Dorsolateral prefrontal cortex (tissue), 120 donors: ENCODE measurements at regions of chr9 and their contacts with region 1.

Region 1: DNA sequence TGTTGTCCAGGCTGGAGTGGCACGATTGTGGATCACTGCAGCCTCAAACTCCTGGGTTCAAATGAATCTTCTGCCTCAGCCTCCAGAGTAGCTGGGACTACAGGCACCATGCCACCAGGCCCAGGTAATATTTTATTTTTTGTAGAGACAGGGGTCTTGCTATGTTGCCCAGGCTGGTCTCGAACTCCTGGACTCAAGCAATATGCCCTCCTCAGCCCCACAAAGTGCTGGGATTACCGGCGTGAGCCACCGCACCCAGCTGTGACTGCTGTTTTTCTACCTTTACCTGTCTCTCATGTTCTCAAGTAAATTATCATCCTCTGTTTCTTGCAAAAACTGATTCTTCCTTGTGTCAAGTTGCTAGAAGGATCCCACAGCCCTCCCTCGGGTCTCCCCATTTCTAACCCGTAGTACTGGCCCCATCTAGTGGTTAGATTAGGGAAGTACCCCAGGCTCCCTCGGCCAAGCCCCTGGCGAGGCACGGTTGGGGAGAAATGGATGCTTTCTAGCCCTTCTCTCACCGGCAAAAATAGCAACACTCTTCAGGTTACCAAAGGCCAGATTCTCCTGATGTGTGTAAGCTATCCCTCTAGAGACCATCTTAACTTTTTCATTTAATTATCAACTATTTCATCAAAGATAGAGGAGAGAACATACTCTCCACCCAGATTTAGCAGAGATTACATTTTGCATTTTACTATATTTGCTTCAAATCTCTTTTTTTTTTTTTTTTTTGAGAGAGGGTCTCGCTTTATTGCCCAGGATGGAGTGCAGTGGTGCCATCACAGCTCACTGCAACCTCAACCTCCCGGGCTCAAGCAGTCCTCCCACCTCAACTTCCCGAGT is 19.2 kb upstream of the TOR1B start:
- DNase-seq: peak; percentile 36 to 74 (median 68)
- H3K4me3 ChIP-seq: no peak overlapping the region
- H3K27ac ChIP-seq: peak overlapping the region in 1 of 59 donors; percentile 18
- H3K27me3 ChIP-seq: no peaks in the 10 kb centered on the region
- CTCF ChIP-seq: peak; percentile 69 to 97 (median 93)

Region 2: DNA sequence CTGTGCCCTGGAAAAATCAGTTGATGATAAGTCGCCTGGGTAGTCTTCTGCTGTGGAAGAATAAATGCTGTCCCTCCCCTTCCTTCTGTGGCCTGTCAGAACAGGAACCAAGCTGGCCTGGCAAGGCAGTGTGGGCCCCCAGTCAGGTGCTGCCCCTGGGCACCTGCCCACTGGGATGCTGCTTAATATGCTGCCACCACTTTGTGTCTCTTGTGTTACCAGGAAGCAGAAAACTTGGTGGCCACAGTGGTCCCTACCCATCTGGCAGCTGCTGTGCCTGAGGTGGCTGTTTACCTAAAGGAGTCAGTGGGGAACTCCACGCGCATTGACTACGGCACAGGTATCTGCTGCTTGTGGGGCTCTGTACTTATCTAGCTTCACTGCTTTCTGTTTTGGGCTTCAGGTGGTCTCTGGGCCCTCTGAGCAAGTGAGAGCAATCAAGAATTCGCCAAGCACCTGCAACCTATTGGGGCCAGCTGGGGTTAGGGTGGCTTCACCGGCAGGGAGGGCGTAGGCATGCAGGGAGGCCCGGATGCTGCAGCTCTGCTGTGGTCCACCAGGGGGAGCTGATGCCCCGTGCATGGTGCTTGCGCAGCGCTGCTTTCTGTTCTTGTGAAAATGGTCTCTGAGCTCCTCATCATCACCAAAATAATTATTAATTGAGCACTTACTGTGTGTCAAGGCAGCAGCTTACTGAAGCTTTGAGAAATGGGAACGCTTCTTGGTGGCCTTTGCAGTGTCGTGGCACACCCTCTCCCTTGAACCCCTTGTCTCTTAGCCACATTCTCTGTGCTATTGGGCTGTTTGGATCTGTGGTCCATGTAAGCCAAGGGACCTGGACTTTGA is 652.2 kb before region 1 on chr9:
- intact Hi-C with region 1: loop called (anchors 2 to 10 kb)
- DNase-seq: peak; percentile 67 to 86 (median 80)
- H3K4me3 ChIP-seq: no peak overlapping the region
- H3K27ac ChIP-seq: peak overlapping the region in 48 of 59 donors; percentile 1 to 75 (median 48)
- H3K27me3 ChIP-seq: no peaks in the 10 kb centered on the region
- CTCF ChIP-seq: peak; percentile 88 to 99 (median 97)

Region 3: GRCh38 chr9:129139993-129140396 is 643.7 kb before region 1 on chr9:
- intact Hi-C with region 1: loop called in 1 of 2 experiments (anchors 10 kb)
- DNase-seq: peak; percentile 59 to 95 (median 86)
- H3K4me3 ChIP-seq: peak overlapping the region; percentile 13 to 66 (median 47)
- H3K27ac ChIP-seq: peak overlapping the region; percentile 98 to 100 (median 100)
- H3K27me3 ChIP-seq: no peaks in the 10 kb centered on the region
- CTCF ChIP-seq: peak in 16 of 56 donors; percentile 6 to 38 (median 17)

Region 4: DNA sequence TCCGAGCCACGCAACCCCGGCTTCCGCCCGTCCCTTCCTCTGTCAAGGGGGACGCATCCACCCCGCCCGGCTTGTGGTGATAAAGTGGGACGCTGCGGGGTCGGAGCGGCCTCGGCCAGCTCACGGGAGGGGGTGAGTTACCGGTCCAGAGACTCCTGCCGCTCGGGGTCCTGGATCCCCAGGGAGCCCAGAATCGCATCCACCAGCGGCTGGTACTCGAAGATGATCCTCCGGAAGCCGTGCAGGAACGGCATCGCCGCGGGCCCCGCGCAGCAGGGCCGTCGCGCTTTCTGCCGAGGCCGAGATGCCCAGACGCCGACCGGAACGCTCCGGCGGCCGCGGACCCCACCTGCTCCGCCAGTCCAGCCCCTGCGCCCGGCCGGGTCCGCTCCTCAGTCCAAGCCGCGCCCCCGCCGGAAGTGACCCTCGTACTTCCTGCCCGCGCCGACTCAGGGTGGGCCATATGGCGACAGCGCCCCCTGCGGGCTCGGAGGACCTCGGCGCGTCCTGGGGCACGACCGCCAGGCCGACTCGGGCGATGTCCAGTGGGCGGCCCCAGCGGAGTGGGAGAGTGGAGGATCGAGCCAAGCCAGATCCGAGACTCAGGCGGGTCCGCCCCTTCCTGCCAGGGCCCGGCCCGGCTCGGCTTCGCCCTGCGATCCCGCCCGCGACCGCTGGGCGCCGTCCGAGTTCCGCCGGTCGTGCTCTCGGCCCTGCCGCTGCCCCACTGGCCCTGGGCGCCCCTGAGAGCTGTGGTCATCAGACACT is 141.8 kb before region 1 on chr9 and contains the start of gene ASB6:
- intact Hi-C with region 1: loop called (anchors 2 to 5 kb)
- DNase-seq: peak; percentile 87 to 97 (median 94)
- H3K4me3 ChIP-seq: peak within 1 kb of the TSS; percentile 61 to 100 (median 98)
- H3K27ac ChIP-seq: peak within 1 kb of the TSS; percentile 19 to 96 (median 88)
- H3K27me3 ChIP-seq: no peaks in the 10 kb centered on the region
- CTCF ChIP-seq: peak; percentile 94 to 100 (median 100)
- total RNA-seq, gene ASB6: 20.5 to 43.2 (median 32.5) TPM

Region 5: DNA sequence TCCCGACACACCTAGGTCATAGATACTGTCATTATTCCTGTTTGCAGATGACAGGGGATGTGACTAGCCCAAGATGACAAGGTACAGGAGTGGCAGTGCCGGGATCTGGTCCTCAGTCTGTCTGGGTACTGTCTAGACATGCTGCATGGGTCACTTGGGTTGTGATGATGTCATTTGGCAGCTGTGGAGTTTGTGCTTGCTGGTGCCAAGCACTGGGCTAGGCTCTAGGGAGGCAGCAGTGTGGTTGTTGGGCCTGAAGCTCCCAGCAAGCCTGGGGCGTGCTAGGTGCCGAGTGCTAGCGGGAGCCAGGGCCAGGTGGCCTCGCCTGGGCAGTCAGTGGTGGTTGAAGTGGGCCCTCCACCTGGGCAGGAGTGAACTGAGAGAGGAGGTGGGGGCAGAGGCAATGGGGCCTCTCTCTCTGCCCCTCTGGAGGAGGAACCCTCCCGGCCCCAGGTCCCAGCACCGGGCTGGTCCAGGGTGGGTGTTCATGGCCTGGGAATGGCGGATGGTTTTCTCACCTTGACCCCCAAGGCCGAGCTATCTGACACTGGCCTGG is 133.0 kb before region 1 on chr9:
- intact Hi-C with region 1: loop called in 1 of 2 experiments (anchors 5 kb)
- DNase-seq: no peak
- H3K4me3 ChIP-seq: no peak overlapping the region
- H3K27ac ChIP-seq: peak overlapping the region in 1 of 59 donors; percentile 6
- H3K27me3 ChIP-seq: no peaks in the 10 kb centered on the region
- CTCF ChIP-seq: no peak

Region 6: GRCh38 chr9:129737479-129738274 is 46.1 kb before region 1 on chr9:
- intact Hi-C with region 1: loop called (anchors 1 to 5 kb)
- DNase-seq: peak; percentile 56 to 85 (median 76)
- H3K4me3 ChIP-seq: peak overlapping the region; percentile 37 to 88 (median 67)
- H3K27ac ChIP-seq: peak overlapping the region in 19 of 59 donors; percentile 9 to 86 (median 53)
- H3K27me3 ChIP-seq: peaks cover 0 to 4% (median 0%) of the 10 kb centered on the region in 45 donors
- CTCF ChIP-seq: peak; percentile 86 to 99 (median 96)